PC-9 (cell line): ENCODE measurements at regions of chr19 and their contacts with region 1.

Region 1: GRCh38 chr19:3304871-3305423 is 61.4 kb upstream of the NFIC start:
- DNase-seq: peak in 1 of 2 experiments; percentile 64
- H3K4me3 ChIP-seq: no peak overlapping the region
- H3K27ac ChIP-seq: no peak overlapping the region
- H3K4me1 ChIP-seq: no peaks in the 10 kb centered on the region
- H3K27me3 ChIP-seq: 0 out of 2 replicates have a peak, but pooled peaks cover 4% of the 10 kb centered on the region
- CTCF ChIP-seq: peak; percentile 80

Region 2: DNA sequence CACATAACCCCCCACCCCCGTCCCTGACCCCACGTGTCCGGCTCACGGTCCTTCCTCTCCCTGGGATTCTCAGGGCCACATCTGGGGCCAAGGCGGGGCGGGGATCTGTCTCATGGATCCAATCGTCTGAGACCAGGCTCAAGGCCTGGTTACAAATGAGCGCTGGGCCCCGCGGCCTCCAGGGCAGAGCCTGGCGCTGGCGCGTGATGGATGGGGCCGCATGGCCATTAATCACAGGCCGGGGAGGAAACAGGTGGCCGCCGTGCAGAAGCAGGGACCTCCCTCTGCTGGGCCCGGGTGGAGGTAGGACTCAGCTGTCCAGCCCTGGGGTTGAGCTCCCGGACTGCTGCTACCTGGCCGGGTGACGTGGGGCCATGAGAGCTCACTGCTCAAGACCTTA is 236.9 kb before region 1 on chr19:
- CTCF ChIA-PET with region 1: interaction called, 13 read pairs
- POLR2A ChIA-PET with region 1: no interaction called
- intact Hi-C with region 1: loop called (anchors 10 kb)
- DNase-seq: no peak
- H3K4me3 ChIP-seq: no peak overlapping the region
- H3K27ac ChIP-seq: no peak overlapping the region
- H3K4me1 ChIP-seq: no peaks in the 10 kb centered on the region
- H3K27me3 ChIP-seq: no peaks in the 10 kb centered on the region
- CTCF ChIP-seq: no peak

Region 3: GRCh38 chr19:3075895-3076431 is 229.0 kb before region 1 on chr19:
- CTCF ChIA-PET with region 1: no interaction called
- POLR2A ChIA-PET with region 1: no interaction called
- intact Hi-C with region 1: loop called (anchors 10 kb)
- DNase-seq: peak in 1 of 2 experiments; percentile 49
- H3K4me3 ChIP-seq: no peak overlapping the region
- H3K27ac ChIP-seq: no peak overlapping the region
- H3K4me1 ChIP-seq: no peaks in the 10 kb centered on the region; the same call in 1 of the 2 replicates
- H3K27me3 ChIP-seq: no peaks in the 10 kb centered on the region
- CTCF ChIP-seq: peak; percentile 87

Region 4: GRCh38 chr19:3087769-3088168 is 217.2 kb before region 1 on chr19:
- CTCF ChIA-PET with region 1: no interaction called
- POLR2A ChIA-PET with region 1: no interaction called
- intact Hi-C with region 1: no loop called
- DNase-seq: no peak
- H3K4me3 ChIP-seq: no peak overlapping the region
- H3K27ac ChIP-seq: no peak overlapping the region
- H3K4me1 ChIP-seq: no peaks in the 10 kb centered on the region
- H3K27me3 ChIP-seq: no peaks in the 10 kb centered on the region
- CTCF ChIP-seq: no peak

Region 5: DNA sequence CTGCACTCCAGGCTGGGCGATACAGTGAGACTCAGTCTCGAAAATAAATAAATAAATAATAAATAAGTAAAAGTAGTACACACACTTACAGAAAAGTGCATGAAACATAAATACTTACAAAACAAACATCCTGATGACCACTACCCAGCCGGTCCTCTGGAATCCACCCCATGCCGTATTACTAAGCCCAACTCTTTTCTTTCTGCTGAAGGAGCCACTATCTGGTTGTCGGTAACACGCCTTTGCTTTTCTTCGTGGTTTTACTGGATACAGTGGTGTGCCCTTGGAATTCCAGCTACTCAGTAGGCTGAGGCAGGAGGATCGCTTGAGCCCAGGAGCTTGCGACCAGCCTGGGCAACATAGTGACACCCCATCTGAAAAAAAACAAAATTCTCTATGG is 41.1 kb before region 1 on chr19:
- CTCF ChIA-PET with region 1: no interaction called
- POLR2A ChIA-PET with region 1: interaction called, 12 read pairs
- intact Hi-C with region 1: no loop called
- DNase-seq: no peak
- H3K4me3 ChIP-seq: no peak overlapping the region
- H3K27ac ChIP-seq: no peak overlapping the region
- H3K4me1 ChIP-seq: no peaks in the 10 kb centered on the region
- H3K27me3 ChIP-seq: 0 out of 2 replicates have a peak, but pooled peaks cover 13% of the 10 kb centered on the region
- CTCF ChIP-seq: no peak

Region 6: GRCh38 chr19:3291644-3292043 is 13.3 kb before region 1 on chr19:
- CTCF ChIA-PET with region 1: interaction called, 20 read pairs
- POLR2A ChIA-PET with region 1: no interaction called
- intact Hi-C with region 1: no loop called
- DNase-seq: no peak
- H3K4me3 ChIP-seq: no peak overlapping the region
- H3K27ac ChIP-seq: no peak overlapping the region
- H3K4me1 ChIP-seq: no peaks in the 10 kb centered on the region
- H3K27me3 ChIP-seq: peaks cover 28% of the 10 kb centered on the region
- CTCF ChIP-seq: no peak

Region 7: DNA sequence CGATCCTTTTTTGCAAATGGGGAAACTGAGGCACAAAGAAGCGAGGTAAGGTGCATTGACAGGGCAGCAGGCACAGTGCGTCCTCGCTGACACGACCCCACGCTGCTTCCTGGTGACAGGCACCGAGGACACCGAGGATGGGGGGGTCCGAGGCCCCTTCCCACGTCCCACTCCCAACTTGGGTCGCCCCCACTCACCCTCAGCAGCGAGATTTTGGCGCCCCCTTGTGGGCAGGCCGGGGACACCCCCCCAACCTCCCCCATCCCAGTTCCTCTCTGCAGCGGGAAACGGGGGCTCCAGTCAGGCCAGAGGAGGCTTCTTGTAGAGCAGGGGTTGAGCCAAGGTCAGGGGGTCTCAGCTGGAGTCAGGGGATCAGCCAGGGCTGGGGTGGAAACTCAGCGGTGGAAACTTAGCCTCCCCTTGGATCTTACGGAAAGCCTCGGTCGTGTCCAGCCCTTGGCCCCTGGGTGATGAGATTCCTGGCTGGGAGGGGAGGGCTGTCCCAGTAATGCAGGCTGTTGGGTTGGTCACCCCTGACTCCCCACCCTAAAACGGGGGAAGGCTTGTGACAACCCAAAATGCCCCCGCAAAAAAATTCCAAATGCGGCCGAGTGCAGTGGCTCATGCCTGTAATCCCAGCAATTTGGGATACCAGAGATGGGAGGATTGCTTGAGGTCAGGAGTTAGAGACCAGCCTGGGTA is 167.2 kb after region 1 on chr19:
- CTCF ChIA-PET with region 1: no interaction called
- POLR2A ChIA-PET with region 1: no interaction called
- intact Hi-C with region 1: loop called (anchors 2 kb)
- DNase-seq: no peak
- H3K4me3 ChIP-seq: no peak overlapping the region
- H3K27ac ChIP-seq: no peak overlapping the region
- H3K4me1 ChIP-seq: no peaks in the 10 kb centered on the region
- H3K27me3 ChIP-seq: no peaks in the 10 kb centered on the region
- CTCF ChIP-seq: peak; percentile 78

Region 8: GRCh38 chr19:3700221-3701032 is 395.5 kb after region 1 on chr19 and contains the start of gene PIP5K1C:
- CTCF ChIA-PET with region 1: no interaction called
- POLR2A ChIA-PET with region 1: interaction called, 14 read pairs
- intact Hi-C with region 1: no loop called
- DNase-seq: peak; percentile 46 to 83
- H3K4me3 ChIP-seq: peak within 1 kb of the TSS; percentile 68
- H3K27ac ChIP-seq: no peak within 1 kb of the TSS
- H3K4me1 ChIP-seq: no peaks in the 10 kb centered on the region; the same call in 1 of the 2 replicates
- H3K27me3 ChIP-seq: no peaks in the 10 kb centered on the region
- CTCF ChIP-seq: peak; percentile 67
- total RNA-seq, gene PIP5K1C: 19.1 and 20.0 TPM in 2 replicates